Astrocyte of the cerebellum (primary cell): ENCODE measurements at regions of chr2 and their contacts with region 1.

Region 1: DNA sequence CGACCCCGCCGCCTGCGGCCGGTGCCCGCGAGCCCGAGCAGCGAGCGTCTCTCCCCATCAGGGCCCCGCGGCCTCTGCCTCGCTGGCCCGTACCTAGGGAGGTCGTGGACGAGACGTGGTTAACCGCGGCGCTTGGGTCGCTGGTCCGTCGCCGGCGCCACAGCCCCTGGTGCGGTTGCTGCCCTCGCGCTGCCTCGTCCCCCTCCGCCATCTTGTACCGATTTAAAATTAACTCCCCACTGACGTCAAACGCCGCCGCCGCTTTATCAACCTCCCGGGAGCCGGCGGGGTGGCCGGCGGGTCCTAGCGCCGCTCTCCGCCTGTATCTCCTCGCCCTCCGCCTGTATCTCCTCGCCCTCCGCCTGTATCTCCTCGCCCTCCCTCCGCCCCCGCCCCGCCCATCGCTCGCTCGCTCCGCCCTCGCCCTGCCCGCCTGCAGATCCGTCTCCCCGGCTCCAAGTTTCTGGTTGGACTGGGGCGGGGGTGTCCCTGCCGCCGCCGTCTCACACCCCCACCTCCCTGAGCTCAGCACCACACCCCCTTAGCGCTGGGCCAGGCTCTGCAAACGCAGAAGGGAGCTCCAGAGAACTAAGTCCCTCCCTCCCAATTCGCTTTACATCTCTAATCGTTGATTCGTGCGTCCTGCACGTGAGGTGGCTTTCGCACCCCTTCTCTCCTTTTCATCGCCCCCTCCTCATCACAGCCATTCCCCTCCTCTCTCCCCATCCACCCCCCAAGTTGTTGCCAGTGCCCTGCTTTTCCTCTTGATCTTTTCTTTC is at the start of gene ATL2:
- DNase-seq: peak; percentile 88
- H3K4me3 ChIP-seq: peak within 1 kb of the TSS; percentile 76
- CTCF ChIP-seq: no peak

Region 2: DNA sequence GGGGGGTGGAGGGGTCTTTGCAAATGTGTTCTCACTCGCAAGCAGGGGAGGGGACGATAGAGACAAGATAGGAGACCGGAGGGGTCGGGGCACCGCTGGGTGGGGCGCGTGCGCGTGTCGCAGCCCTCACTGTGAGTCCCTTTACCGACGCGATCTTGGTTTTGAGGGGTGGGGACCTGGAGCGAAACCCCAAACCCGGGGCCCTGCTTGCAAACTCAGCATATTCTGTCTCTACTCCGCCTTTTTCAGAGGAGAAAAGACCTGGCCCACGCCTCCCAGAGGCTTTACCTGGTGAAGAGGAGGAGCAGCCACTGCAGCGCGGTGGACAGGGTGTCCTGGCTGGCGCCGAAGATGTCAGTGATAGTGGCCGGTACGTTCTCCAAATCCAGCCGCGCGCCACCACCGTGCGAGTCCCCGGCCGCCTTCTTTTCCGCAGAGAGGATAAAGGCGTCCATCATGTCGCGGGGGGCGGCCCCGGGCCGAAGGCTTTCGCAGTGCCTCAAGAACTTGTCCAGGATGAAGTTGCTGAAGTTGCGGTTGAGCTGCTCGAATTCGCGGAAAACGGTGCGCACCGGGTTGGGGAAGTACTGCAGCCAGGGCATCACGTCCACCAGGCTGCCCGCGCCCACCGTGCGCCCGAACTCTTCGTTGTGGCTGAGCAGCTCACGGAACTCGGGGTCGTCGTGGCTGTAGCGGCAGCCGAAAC is 303.0 kb before region 1 on chr2:
- in situ Hi-C with region 1: no loop called
- DNase-seq: no peak
- H3K4me3 ChIP-seq: peak overlapping the region; percentile 57
- CTCF ChIP-seq: no peak

Region 3: DNA sequence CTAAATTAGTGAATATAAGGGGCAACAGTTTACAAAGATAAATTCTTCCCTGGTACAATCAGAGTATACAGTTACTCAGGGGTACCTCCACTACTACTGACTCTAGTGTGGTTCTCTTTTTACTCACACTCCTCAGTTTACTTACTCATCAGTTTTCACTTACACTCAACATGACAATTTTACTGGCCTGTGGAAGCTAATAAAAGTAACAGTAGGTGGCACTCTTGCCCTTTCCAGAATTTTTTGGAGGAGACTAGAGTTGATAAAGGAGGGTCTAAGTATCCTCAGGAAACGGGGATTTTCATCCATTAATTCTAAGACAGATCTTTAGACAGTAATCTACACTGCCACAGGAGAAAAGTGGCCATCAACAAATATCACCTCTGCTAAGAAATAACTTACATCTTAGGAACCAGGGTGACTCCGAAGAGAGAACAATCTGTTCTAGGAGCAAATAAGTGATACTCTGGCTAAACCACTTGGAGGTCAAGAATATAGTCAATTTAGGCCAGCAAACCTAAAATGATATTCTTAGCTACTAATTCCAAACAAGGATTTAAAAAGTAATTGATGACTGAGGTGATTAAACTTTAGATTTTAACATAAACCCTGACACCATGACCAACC is 61.4 kb before region 1 on chr2:
- in situ Hi-C with region 1: no loop called
- DNase-seq: peak; percentile 52
- H3K4me3 ChIP-seq: no peak overlapping the region
- CTCF ChIP-seq: peak; percentile 72

Region 4: GRCh38 chr2:38465789-38466127 is 88.5 kb after region 1 on chr2:
- in situ Hi-C with region 1: loop called (anchors 5 kb)
- DNase-seq: no peak
- H3K4me3 ChIP-seq: no peak overlapping the region
- CTCF ChIP-seq: peak; percentile 63